Colonic mucosa (tissue), 4 donors: ENCODE measurements at regions of chr12 and their contacts with region 1.

Region 1: DNA sequence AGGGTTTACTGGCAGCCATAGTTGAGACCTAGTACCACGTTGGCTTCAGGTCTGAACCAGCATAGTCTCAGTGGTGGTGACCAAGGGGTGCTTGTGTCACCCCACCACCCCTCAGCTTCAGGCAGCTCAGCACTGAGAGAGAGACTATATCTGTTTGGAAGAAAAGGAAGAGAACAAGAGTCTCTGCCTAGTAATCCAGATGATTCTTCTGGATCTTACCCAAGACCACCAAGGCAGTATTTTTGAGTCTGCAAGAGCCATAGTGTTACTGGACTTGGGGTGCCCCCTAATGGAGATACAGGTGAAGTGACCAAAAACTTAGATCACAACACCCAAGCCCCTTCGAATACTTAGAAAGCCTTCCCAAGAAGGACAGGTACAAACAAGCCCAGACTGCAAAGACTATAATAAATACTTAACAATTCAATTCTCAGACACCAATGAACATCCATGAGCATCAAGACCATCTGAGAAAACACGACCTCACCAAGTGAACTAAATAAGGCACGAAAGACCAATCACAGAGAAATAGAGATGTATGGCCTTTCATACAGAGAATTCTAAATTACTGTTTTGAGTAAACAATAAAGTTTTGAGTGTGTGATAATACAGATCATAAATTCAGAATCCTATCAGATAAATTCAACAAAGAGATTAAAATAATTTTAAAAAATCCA is 107.0 kb downstream of the HELB start:
- DNase-seq: peak; percentile 33
- H3K4me3 ChIP-seq: no peak overlapping the region
- H3K27ac ChIP-seq: no peak overlapping the region
- H3K4me1 ChIP-seq: no peaks in the 10 kb centered on the region
- H3K27me3 ChIP-seq: no peaks in the 10 kb centered on the region
- CTCF ChIP-seq: peak; percentile 51

Region 2: DNA sequence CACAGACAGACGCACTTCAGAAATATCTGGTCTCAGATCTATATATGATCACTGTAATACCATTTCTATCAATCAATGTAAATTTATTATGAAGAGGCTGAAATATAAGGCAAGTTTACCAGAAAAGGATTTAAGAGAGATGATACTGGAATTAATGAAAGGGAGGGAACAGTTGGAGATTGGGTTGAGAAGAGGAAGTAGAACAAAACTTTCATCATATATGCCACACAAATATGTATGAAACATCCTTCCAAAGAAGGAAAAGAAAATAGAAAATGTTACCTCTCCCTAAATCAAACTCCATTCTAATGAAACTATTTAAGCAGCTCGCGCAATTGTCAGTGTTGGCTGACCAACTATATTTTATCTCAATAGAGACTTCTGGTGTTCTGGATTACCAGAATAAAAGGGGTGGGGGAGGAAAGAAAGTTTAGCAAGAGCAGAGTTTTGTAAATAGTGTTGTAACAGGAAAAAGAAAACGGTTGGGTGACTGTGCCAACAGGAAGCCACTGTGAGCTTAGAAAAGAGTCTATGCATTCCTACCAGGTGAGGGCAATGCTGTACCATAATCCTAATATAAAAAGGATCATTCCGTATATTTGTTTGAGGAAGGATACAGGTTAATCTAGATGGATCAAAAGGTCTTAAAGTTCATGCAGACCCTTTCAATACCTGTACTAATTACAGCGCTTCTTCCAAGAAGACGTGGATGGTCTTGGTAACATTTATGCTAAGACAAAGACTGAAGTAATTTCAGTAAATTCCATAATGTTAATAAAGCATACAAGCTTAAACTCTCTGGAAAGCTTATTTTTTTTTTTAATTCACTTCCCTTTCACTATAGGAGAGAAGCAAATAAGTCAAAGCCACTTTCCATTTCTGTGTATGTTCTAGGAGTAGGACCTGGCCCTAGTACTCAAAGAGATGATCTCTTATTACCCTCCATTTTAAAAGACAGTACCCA is 264.3 kb before region 1 on chr12:
- intact Hi-C with region 1: loop called (anchors 10 kb)
- DNase-seq: peak; percentile 75
- H3K4me3 ChIP-seq: no peak overlapping the region
- H3K27ac ChIP-seq: peak overlapping the region; percentile 58
- H3K4me1 ChIP-seq: no peaks in the 10 kb centered on the region
- H3K27me3 ChIP-seq: no peaks in the 10 kb centered on the region
- CTCF ChIP-seq: peak; percentile 65

Region 3: GRCh38 chr12:66269757-66270383 is 139.5 kb before region 1 on chr12:
- intact Hi-C with region 1: loop called (anchors 2 kb)
- DNase-seq: no peak
- H3K4me3 ChIP-seq: no peak overlapping the region
- H3K27ac ChIP-seq: no peak overlapping the region
- H3K4me1 ChIP-seq: no peaks in the 10 kb centered on the region
- H3K27me3 ChIP-seq: no peaks in the 10 kb centered on the region
- CTCF ChIP-seq: peak; percentile 59

Region 4: DNA sequence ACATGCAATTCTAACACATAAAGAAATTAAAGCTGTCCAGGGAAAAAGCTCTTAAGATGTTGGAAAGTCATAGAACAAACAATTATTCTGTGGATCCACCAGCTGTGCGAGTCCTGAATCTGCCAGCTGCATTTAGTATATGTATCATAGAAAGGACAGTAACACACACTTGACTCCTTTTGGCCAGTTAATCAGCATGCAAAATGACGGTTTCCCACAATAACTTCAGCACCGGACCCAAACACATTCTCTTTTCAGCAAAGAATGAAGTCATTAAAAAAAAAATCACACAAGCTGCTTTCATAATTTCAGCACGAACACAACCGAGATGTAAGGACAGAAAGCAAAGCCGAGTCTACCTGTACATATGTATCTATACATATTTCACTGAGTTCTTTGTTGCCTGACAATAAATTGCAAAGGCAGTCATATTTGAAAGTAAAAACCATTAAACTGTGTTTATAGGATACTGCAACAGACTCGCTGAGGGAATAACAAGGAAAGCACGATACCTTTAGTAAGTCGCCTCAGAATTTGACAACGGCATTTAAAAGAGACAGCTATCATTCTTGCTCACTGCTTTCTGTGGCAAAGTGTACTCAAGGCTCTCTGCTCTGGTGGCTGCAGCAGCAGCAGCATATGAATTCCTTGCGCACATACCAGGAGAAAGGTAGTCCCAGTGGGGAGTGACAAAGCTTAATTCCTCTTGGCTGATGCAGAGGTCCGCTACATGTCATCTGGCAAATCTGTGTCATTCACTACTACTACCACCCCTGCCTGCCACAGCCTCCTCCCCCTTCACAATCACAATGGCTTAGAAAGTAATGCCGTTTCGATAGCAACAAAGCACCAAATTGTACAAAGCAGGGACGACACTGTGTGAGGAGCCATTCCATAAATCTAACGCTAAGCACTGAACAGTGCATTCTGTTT is 269.3 kb after region 1 on chr12 and contains the start of gene GRIP1:
- intact Hi-C with region 1: no loop called
- DNase-seq: no peak
- H3K4me3 ChIP-seq: no peak within 1 kb of the TSS
- H3K27ac ChIP-seq: no peak within 1 kb of the TSS
- H3K4me1 ChIP-seq: no peaks in the 10 kb centered on the region
- H3K27me3 ChIP-seq: no peaks in the 10 kb centered on the region
- CTCF ChIP-seq: no peak
- total RNA-seq, gene GRIP1: 3.7 to 6.2 TPM